Heart left ventricle (tissue), 16 donors: ENCODE measurements at regions of chr9 and their contacts with region 1.

Region 1: DNA sequence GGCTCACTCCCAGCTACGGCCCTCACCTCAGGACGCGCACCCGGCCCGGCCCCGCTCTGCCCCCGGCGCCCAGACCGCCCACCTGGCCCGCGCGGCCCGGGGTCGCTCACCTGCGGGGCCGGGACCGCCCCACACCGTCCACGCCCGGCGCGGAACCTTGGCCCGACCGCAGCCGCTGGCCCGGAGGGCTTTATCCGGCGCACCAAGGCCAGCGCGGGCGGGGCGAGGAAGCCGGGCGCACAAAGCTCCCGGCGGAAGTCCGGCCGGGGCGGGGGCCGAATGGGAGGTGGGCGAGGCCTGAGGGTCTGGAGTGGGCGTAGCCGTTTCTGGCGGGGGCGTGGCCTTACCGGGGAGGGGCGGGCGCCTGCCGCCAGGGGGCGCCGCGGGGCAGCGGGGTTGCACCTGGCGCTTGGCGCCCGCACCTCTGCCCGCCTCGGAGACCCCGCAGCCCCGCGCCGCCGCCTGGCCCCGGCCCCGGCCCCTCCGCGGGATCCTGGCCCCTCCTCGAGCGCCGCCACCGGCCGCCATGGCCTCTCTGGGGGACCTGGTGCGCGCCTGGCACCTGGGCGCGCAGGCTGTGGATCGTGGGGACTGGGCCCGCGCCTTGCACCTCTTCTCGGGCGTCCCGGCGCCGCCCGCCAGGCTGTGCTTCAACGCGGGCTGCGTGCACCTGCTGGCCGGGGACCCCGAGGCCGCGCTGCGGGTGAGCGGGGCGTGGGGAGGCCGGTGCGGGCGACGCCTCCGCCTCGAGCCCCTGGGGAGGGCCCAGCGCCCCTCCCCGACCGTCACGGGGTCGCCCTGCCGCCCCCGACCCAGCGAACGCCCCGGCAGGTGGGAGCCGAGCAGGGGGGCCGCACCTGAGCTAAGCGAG is at the starts of genes EXD3 and NOXA1:
- DNase-seq: peak; percentile 94 to 97 (median 95)
- ATAC-seq: peak; percentile 94 to 98 (median 96)
- H3K4me3 ChIP-seq: peak within 1 kb of the TSS; percentile 63 to 100 (median 92)
- H3K27ac ChIP-seq: peak within 1 kb of the TSS; percentile 48 to 89 (median 82)
- H3K4me1 ChIP-seq: peaks cover 0 to 38% (median 25%) of the 10 kb centered on the region in 12 donors
- H3K27me3 ChIP-seq: no peaks in the 10 kb centered on the region
- CTCF ChIP-seq: peak; percentile 26 to 88 (median 63)
- POLR2A ChIP-seq: peak in 1 of 2 donors; percentile 49
- total RNA-seq, gene EXD3: 4.1 to 12.9 (median 8.6) TPM
- total RNA-seq, gene NOXA1: 0.81 to 5.5 (median 2.7) TPM

Region 2: DNA sequence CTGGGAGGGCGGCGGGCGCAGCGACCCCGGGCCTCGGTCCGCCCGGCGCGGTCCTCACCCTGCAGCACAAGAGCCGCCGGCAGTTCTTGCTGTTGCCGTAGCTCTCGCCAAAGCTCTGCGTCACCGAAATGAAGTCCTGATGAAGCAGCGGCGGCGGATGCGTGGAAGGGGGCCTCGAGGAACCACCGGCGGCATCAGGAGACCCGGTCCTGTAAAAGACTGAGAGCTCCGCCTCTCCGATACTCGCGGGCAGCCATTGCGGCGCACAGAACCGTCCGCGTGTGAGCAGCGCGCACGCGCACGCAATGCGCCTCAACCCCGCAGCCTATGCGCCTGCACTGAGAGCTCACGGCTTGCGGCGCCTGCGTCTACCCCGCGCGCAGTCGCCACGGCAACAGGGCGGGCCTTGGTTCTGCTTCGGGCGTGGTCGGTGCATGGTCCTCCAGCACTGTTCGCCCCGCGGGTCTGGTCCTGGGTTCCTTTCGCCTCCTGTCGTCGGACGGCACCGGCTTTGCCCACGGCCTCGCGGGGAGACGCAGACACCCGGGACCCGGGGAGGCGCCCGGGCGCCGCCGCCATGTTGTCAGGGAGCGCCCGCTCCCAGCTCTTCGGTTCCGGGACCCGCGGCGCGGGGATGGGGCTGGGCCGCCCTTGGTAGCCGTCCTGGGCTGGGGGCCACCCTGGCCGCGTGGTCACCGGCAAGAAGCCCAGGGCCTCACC is 293.6 kb before region 1 on chr9:
- intact Hi-C with region 1: loop called in 1 of 10 experiments (anchors 10 kb)
- DNase-seq: peak; percentile 87 to 95 (median 91)
- ATAC-seq: peak; percentile 99 to 100 (median 99)
- H3K4me3 ChIP-seq: peak overlapping the region; percentile 52 to 89 (median 80)
- H3K27ac ChIP-seq: peak overlapping the region in 11 of 12 donors; percentile 58 to 87 (median 72)
- H3K4me1 ChIP-seq: peaks cover 0 to 39% (median 24%) of the 10 kb centered on the region in 12 donors
- H3K27me3 ChIP-seq: peaks cover 0 to 22% (median 8%) of the 10 kb centered on the region in 9 donors
- CTCF ChIP-seq: no peak
- POLR2A ChIP-seq: peak in 1 of 2 donors; percentile 59

Region 3: DNA sequence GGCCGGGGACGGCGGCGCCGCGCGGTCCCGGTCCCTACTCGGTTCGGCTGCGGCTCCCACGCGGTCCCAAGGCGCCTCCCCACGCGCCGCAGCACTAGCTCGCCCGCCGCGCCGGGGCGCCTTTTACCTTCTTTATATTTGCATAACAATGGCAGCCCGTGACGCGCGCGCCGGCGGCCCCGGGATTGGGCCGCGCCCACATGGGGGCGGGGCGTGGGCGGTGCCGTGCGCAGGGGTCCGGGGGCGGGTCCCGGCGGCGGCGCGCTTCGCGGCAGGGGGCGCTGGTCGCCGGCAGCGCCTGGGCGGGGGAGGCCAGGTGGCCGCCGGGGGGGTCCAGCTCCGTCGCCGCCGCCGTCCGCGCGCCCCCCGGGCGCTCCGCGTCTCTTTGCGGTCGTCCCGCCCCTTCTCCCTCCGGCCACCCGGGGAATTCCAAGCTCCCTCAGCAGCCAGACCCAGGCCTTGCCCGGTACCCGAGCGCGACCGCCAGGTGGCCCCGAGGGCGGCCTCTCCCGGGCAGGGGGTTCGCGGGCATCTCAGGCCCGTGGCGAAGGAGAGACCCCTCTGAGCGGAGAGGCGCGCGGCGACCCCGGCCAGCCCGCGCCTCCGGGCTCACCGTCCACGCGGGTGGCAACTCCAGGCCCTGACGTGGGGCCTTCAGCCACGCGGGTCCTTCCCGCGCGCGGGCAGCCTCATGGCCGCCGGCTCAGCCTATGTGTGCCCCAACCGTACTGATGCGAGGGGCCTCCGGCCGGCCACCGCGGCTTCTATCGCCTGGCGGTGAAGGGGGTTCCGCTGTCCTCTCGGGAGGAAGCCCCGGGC is 120.9 kb before region 1 on chr9 and contains the start of gene NRARP:
- intact Hi-C with region 1: loop called in 1 of 10 experiments (anchors 5 kb)
- DNase-seq: peak; percentile 92 to 96 (median 94)
- ATAC-seq: peak; percentile 47 to 77 (median 67)
- H3K4me3 ChIP-seq: peak within 1 kb of the TSS; percentile 48 to 94 (median 68)
- H3K27ac ChIP-seq: peak within 1 kb of the TSS; percentile 63 to 98 (median 88)
- H3K4me1 ChIP-seq: peaks cover 12 to 91% (median 52%) of the 10 kb centered on the region in 12 donors
- H3K27me3 ChIP-seq: peaks cover 0 to 62% (median 6%) of the 10 kb centered on the region in 9 donors
- CTCF ChIP-seq: peak; percentile 30 to 69 (median 51)
- POLR2A ChIP-seq: peak; percentile 25 to 91
- total RNA-seq, gene NRARP: 6.4 to 15.8 (median 10.3) TPM

Region 4: GRCh38 chr9:137368431-137369035 is 54.7 kb before region 1 on chr9:
- intact Hi-C with region 1: no loop called
- DNase-seq: peak; percentile 58 to 81 (median 67)
- ATAC-seq: peak in 3 of 4 donors; percentile 66 to 81 (median 74)
- H3K4me3 ChIP-seq: peak overlapping the region in 2 of 12 donors; percentile 5 to 16
- H3K27ac ChIP-seq: peak overlapping the region in 10 of 12 donors; percentile 2 to 78 (median 62)
- H3K4me1 ChIP-seq: peaks cover 0 to 15% (median 5%) of the 10 kb centered on the region in 12 donors
- H3K27me3 ChIP-seq: no peaks in the 10 kb centered on the region
- CTCF ChIP-seq: no peak
- POLR2A ChIP-seq: no peak

Region 5: GRCh38 chr9:137445275-137445807 is 22.1 kb after region 1 on chr9:
- intact Hi-C with region 1: loop called in 1 of 10 experiments (anchors 2 kb)
- DNase-seq: peak; percentile 69 to 81 (median 74)
- ATAC-seq: peak; percentile 30 to 70 (median 68)
- H3K4me3 ChIP-seq: no peak overlapping the region
- H3K27ac ChIP-seq: no peak overlapping the region
- H3K4me1 ChIP-seq: peaks cover 0 to 19% (median 4%) of the 10 kb centered on the region in 12 donors
- H3K27me3 ChIP-seq: peaks cover 0 to 31% (median 5%) of the 10 kb centered on the region in 9 donors
- CTCF ChIP-seq: peak; percentile 67 to 88 (median 79)
- POLR2A ChIP-seq: no peak

Region 6: GRCh38 chr9:137521405-137521985 is 98.3 kb after region 1 on chr9:
- intact Hi-C with region 1: loop called in 3 of 10 experiments (anchors 5 to 10 kb)
- DNase-seq: no peak
- ATAC-seq: no peak
- H3K4me3 ChIP-seq: no peak overlapping the region
- H3K27ac ChIP-seq: no peak overlapping the region
- H3K4me1 ChIP-seq: no peaks in the 10 kb centered on the region
- H3K27me3 ChIP-seq: no peaks in the 10 kb centered on the region
- CTCF ChIP-seq: no peak
- POLR2A ChIP-seq: no peak

Region 7: GRCh38 chr9:137618105-137619067 is 195.1 kb after region 1 on chr9 and contains the start of gene EHMT1:
- intact Hi-C with region 1: no loop called
- DNase-seq: peak; percentile 83 to 95 (median 89)
- ATAC-seq: peak; percentile 65 to 86 (median 84)
- H3K4me3 ChIP-seq: peak within 1 kb of the TSS; percentile 77 to 100 (median 90)
- H3K27ac ChIP-seq: peak within 1 kb of the TSS; percentile 88 to 96 (median 92)
- H3K4me1 ChIP-seq: peaks cover 4 to 56% (median 39%) of the 10 kb centered on the region in 12 donors
- H3K27me3 ChIP-seq: no peaks in the 10 kb centered on the region
- CTCF ChIP-seq: peak in 1 of 12 donors; percentile 6
- POLR2A ChIP-seq: peak in 1 of 2 donors; percentile 58
- total RNA-seq, gene EHMT1: 27.8 to 55.9 (median 32.0) TPM